GM12878 (cell line): ENCODE measurements at regions of chr12 and their contacts with region 1.

Region 1: GRCh38 chr12:64696080-64696741 is 63.0 kb downstream of the GNS start:
- DNase-seq: no peak
- ATAC-seq: no peak
- H3K4me3 ChIP-seq: no peak overlapping the region
- H3K27ac ChIP-seq: no peak overlapping the region
- H3K4me1 ChIP-seq: 0 out of 2 replicates have a peak, but pooled peaks cover 3% of the 10 kb centered on the region
- H3K27me3 ChIP-seq: no peaks in the 10 kb centered on the region
- CTCF ChIP-seq: peak in 1 of 3 experiments; percentile 40; a peak in 2 of 6 replicates
- EP300 ChIP-seq: no peak
- POLR2A ChIP-seq: no peak
- RAD21 ChIP-seq: peak; percentile 45

Region 2: GRCh38 chr12:64551698-64552097 is 144.5 kb before region 1 on chr12:
- CTCF ChIA-PET with region 1: interaction called, 175 read pairs
- POLR2A ChIA-PET with region 1: no interaction called
- RAD21 ChIA-PET with region 1: interaction called, 103 read pairs
- SMC1A ChIA-PET with region 1: interaction called, 139 read pairs
- in situ Hi-C with region 1: loop called (anchors 5 kb)
- intact Hi-C with region 1: loop called (anchors 1 kb)
- DNase-seq: no peak
- ATAC-seq: no peak
- H3K4me3 ChIP-seq: no peak overlapping the region
- H3K27ac ChIP-seq: no peak overlapping the region
- H3K4me1 ChIP-seq: no peaks in the 10 kb centered on the region; the same call in 1 of the 2 replicates
- H3K27me3 ChIP-seq: no peaks in the 10 kb centered on the region; a peak in 1 of 4 replicates
- CTCF ChIP-seq: no peak
- EP300 ChIP-seq: no peak
- POLR2A ChIP-seq: no peak
- RAD21 ChIP-seq: no peak

Region 3: DNA sequence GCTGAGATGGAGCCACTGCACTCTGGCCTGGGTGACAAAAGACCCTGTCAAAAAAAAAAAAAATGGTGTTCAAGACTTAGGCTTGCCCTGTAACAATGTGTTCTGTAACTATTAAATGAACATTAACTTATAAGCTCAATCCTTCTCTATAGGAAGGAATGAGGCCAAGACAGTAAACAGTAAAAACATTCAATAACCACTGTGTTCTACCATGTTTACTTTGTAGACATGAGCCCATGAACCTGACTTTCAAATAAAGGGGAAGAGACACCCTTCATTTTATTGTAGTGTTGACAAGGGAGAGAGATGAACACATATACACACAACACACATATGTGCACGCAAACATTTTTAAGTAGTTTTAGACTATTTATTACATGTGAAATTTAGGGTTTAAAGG is 106.0 kb before region 1 on chr12:
- CTCF ChIA-PET with region 1: interaction called, 12 read pairs
- POLR2A ChIA-PET with region 1: no interaction called
- RAD21 ChIA-PET with region 1: interaction called, 6 read pairs
- SMC1A ChIA-PET with region 1: interaction called, 5 read pairs
- in situ Hi-C with region 1: no loop called
- intact Hi-C with region 1: no loop called
- DNase-seq: no peak
- ATAC-seq: no peak
- H3K4me3 ChIP-seq: no peak overlapping the region
- H3K27ac ChIP-seq: no peak overlapping the region
- H3K4me1 ChIP-seq: no peaks in the 10 kb centered on the region
- H3K27me3 ChIP-seq: no peaks in the 10 kb centered on the region
- CTCF ChIP-seq: no peak
- EP300 ChIP-seq: no peak
- POLR2A ChIP-seq: no peak
- RAD21 ChIP-seq: no peak

Region 4: GRCh38 chr12:64625243-64626077 is 70.8 kb before region 1 on chr12:
- CTCF ChIA-PET with region 1: interaction called, 6 read pairs
- POLR2A ChIA-PET with region 1: no interaction called
- RAD21 ChIA-PET with region 1: interaction called, 12 read pairs
- SMC1A ChIA-PET with region 1: interaction called, 20 read pairs
- in situ Hi-C with region 1: no loop called
- intact Hi-C with region 1: no loop called
- DNase-seq: peak; percentile 78
- ATAC-seq: peak; percentile 64
- H3K4me3 ChIP-seq: peak overlapping the region; percentile 66
- H3K27ac ChIP-seq: peak overlapping the region; percentile 98
- H3K4me1 ChIP-seq: peaks cover 39% of the 10 kb centered on the region
- H3K27me3 ChIP-seq: no peaks in the 10 kb centered on the region
- CTCF ChIP-seq: 0 out of 6 replicates have a peak, but pooled peaks of 1 of the 3 experiments have one; percentile 6
- EP300 ChIP-seq: peak in 1 of 2 experiments; percentile 76; a peak in 2 of 4 replicates
- POLR2A ChIP-seq: peak; percentile 44; the same call in 1 of the 2 replicates
- RAD21 ChIP-seq: no peak

Region 5: GRCh38 chr12:64650762-64651161 is 45.4 kb before region 1 on chr12:
- CTCF ChIA-PET with region 1: no interaction called
- POLR2A ChIA-PET with region 1: no interaction called
- RAD21 ChIA-PET with region 1: no interaction called
- SMC1A ChIA-PET with region 1: no interaction called
- in situ Hi-C with region 1: no loop called
- intact Hi-C with region 1: no loop called
- DNase-seq: no peak
- ATAC-seq: no peak
- H3K4me3 ChIP-seq: no peak overlapping the region
- H3K27ac ChIP-seq: no peak overlapping the region
- H3K4me1 ChIP-seq: peaks cover 4% of the 10 kb centered on the region
- H3K27me3 ChIP-seq: no peaks in the 10 kb centered on the region
- CTCF ChIP-seq: no peak
- EP300 ChIP-seq: no peak
- POLR2A ChIP-seq: no peak
- RAD21 ChIP-seq: no peak

Region 6: DNA sequence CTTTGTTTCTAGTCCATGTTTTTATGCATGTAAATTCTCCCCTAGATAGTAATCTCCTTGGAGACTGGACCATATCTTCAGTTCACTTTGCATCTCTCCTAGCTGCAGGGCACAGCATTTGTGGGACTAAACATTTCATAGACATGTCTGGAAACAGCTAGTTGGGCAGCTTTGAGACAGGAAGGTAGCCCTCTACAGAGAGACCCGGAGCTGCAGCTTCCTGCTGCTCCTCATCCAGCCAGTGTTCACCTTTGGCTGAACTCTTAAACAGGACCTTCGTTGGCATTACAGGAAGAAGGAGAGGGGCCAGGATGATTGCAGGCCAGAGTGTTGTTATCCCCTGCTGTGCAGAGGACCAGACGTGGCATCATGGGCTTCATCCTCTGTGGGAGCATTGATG is 10.1 kb after region 1 on chr12:
- CTCF ChIA-PET with region 1: interaction called, 19 read pairs
- POLR2A ChIA-PET with region 1: interaction called, 3 read pairs
- RAD21 ChIA-PET with region 1: no interaction called
- SMC1A ChIA-PET with region 1: interaction called, 5 read pairs
- in situ Hi-C with region 1: no loop called
- intact Hi-C with region 1: no loop called
- DNase-seq: no peak
- ATAC-seq: no peak
- H3K4me3 ChIP-seq: no peak overlapping the region
- H3K27ac ChIP-seq: no peak overlapping the region
- H3K4me1 ChIP-seq: no peaks in the 10 kb centered on the region
- H3K27me3 ChIP-seq: no peaks in the 10 kb centered on the region
- CTCF ChIP-seq: no peak
- EP300 ChIP-seq: no peak
- POLR2A ChIP-seq: no peak
- RAD21 ChIP-seq: no peak

Region 7: DNA sequence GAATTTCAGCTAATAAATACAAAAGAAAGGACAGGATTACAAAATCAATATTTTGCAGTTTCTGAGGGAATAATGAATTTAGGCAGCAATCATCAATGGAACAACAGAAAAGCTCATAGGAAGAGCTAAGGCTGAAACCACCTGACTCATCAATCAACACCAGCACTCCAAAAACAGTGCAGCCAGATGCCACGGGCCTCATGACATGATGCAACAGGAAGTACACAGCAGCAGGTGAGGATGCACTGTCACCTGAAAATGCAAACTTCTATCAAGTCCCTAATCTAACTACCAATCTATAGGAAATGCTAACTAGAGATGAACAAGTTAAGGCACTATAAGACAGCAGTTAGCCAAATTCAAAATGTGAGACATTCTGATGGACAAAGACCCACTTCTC is 41.3 kb after region 1 on chr12:
- CTCF ChIA-PET with region 1: no interaction called
- POLR2A ChIA-PET with region 1: no interaction called
- RAD21 ChIA-PET with region 1: no interaction called
- SMC1A ChIA-PET with region 1: no interaction called
- in situ Hi-C with region 1: no loop called
- intact Hi-C with region 1: no loop called
- DNase-seq: no peak
- ATAC-seq: no peak
- H3K4me3 ChIP-seq: no peak overlapping the region
- H3K27ac ChIP-seq: no peak overlapping the region
- H3K4me1 ChIP-seq: no peaks in the 10 kb centered on the region
- H3K27me3 ChIP-seq: no peaks in the 10 kb centered on the region
- CTCF ChIP-seq: no peak
- EP300 ChIP-seq: no peak
- POLR2A ChIP-seq: no peak
- RAD21 ChIP-seq: no peak